BJ (cell line): ENCODE measurements at regions of chr6 and their contacts with region 1.

Region 1: DNA sequence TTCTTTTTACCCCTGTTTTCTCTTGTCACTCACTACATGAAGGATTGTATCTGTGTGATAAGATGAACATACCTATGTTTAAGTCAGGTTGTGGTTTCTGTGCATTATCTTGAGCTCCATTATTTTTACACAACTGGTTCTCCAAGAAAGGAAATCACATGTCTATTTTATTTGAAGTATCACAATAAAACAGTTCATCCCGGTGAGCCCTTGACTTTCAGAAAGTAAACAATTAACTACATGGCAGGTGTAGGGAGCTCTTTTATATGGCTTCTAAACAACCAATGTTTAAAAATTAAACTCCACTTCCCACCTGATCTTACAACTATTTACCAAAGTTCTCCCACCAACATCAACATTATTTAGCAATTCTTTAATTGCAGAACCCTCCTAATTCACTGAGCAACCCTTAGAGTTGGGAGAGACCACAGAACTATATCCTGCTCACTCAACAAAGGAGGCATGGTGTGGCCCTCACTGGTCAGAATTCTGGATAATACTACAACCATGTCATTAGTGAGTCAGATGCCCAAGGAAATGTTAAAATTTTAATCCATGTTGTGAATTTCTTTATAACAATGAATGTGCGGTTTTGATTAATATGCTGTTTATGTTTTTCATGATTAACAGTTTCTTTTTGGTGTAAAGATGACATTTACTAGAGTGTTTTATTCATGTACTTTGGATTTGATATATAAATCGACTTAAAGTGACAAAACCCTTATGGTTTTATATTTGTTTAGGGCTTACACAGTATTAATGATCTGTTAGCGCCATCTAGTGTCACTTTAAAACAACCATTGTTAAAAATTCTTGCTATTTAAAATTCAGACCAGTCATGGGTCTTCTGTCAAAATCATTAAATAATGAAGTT is 50.0 kb upstream of the SCGN start:
- DNase-seq: peak; percentile 16
- H3K4me3 ChIP-seq: no peak overlapping the region
- H3K27me3 ChIP-seq: no peaks in the 10 kb centered on the region
- CTCF ChIP-seq: peak; percentile 42

Region 2: DNA sequence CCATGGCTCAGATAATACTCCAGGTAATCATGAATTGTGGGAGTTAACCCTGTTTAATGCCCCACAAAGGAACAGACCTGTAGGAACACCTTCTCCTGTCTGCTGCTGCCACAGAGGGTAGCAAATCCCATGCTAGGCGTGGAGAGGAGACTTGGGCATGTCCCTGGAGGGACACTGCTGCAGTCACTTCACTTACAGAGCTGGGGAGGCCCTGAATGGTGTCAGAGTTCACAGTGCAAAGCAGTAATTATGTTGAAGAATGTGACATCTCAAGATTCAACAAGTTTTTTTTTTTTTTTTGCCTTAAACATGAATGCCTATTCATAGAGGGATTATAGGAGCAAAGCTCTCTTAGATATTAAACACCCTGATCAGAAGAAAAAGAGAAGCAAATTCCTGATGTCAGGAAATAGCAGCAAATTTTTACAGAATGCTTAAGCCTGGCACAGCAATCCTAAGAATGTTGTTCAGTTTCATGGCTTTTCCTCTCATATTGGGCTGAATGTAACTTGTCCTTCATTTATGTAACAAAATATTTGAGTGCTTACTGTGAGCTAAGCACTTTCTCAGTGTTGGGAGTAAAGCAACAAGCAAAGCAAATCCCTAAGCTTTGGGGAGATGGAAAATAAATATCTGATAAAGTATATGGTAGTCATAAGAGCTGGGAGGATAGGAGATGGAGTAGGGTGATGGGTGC is 277.8 kb before region 1 on chr6:
- CTCF ChIA-PET with region 1: no interaction called
- POLR2A ChIA-PET with region 1: no interaction called
- DNase-seq: no peak
- H3K4me3 ChIP-seq: no peak overlapping the region
- H3K27me3 ChIP-seq: no peaks in the 10 kb centered on the region
- CTCF ChIP-seq: no peak

Region 3: GRCh38 chr6:25458485-25458884 is 143.6 kb before region 1 on chr6:
- CTCF ChIA-PET with region 1: no interaction called
- POLR2A ChIA-PET with region 1: no interaction called
- DNase-seq: no peak
- H3K4me3 ChIP-seq: no peak overlapping the region
- H3K27me3 ChIP-seq: no peaks in the 10 kb centered on the region
- CTCF ChIP-seq: no peak

Region 4: DNA sequence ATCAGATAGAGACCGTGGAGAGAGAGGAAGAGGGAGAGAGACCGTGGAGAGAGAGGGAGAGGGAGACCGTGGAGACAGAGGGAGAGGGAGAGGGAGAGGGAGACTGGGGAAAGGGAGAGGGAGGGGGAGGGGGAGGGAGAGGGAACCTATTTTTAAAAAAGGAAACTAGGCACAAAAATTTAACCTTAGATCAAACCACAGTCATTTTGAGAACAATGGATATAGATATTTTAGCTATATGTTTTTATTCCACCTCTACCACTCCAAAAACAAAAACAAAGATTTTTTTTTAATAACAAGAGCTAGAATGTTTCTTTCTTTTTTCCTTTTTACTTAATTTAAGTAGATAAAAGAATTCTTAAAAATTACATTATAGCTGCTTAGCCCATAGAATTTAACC is 15.1 kb before region 1 on chr6:
- CTCF ChIA-PET with region 1: interaction called, 16 read pairs
- POLR2A ChIA-PET with region 1: no interaction called
- DNase-seq: no peak
- H3K4me3 ChIP-seq: no peak overlapping the region
- H3K27me3 ChIP-seq: no peaks in the 10 kb centered on the region
- CTCF ChIP-seq: no peak

Region 5: GRCh38 chr6:25769986-25770385 is 167.9 kb after region 1 on chr6:
- CTCF ChIA-PET with region 1: no interaction called
- POLR2A ChIA-PET with region 1: no interaction called
- DNase-seq: no peak
- H3K4me3 ChIP-seq: no peak overlapping the region
- H3K27me3 ChIP-seq: no peaks in the 10 kb centered on the region
- CTCF ChIP-seq: no peak

Region 6: DNA sequence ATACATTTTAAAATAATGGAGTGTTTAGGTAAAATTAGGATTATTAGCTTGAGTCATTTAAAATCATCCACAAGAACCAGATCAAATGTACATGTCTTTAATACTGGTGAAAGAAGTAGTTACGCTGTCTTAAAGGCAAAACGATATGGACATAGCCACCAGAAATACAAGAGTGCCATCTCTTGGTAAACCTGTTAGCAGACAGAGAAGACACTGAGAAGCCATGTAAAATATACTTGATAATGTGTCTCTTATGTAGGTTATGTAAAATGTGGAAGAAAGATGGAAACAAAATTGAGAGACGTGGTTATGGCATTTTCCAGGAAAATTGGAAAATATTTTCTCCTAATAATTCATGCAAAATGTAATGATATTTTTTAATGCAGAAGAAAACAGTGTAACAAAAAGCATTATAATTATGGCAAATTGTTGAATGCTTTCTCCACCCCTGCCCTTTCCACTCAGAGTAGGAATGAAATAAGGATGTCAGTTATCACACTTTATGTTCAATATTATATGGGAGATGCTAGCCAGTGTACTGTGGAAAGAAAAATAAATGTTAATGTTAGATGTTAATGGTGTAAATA is 340.6 kb after region 1 on chr6:
- CTCF ChIA-PET with region 1: no interaction called
- POLR2A ChIA-PET with region 1: no interaction called
- DNase-seq: no peak
- H3K4me3 ChIP-seq: no peak overlapping the region
- H3K27me3 ChIP-seq: no peaks in the 10 kb centered on the region
- CTCF ChIP-seq: peak; percentile 38